Panc1 (cell line): ENCODE measurements at regions of chr20 and their contacts with region 1.

Region 1: GRCh38 chr20:25571817-25572216 is 13.5 kb downstream of the NINL start:
- DNase-seq: no peak
- ATAC-seq: no peak
- H3K4me3 ChIP-seq: no peak overlapping the region
- H3K27ac ChIP-seq: no peak overlapping the region
- H3K4me1 ChIP-seq: no peaks in the 10 kb centered on the region
- H3K27me3 ChIP-seq: no peaks in the 10 kb centered on the region
- CTCF ChIP-seq: no peak

Region 2: DNA sequence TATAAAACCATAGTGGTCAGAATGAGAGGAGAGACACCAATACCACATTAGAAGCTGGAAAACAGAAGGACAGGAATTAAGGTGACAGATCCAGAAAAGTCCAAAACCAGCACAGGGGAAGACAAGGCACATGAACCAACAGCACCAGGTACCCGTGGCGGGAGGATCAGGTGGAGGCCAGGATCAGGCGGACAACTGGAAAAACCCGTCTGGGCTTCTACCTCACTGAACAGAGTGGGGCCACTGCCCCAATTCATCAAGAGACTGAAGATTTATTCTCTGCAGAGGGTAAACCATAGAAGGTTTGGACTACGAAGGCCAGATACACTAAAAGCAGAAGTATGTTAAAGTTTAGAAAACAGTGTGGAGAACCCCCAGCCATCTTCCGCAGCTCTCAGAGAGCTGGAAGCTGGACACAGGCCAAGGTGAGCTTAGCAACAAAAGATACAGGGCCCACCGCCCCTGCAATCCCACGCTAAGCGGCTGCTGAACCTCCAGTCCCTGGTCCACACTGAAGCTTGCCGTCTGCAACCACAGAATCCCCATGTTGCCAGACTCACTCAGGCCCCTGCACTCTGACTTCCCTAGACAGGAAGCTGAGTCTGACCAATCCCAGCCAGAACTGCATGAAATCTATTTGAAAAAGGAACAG is 211.1 kb before region 1 on chr20:
- CTCF ChIA-PET with region 1: no interaction called
- POLR2A ChIA-PET with region 1: no interaction called
- in situ Hi-C with region 1: no loop called
- intact Hi-C with region 1: no loop called
- DNase-seq: no peak
- ATAC-seq: peak; percentile 76; the same call in 1 of the 2 replicates
- H3K4me3 ChIP-seq: no peak overlapping the region
- H3K27ac ChIP-seq: peak overlapping the region; percentile 64
- H3K4me1 ChIP-seq: peaks cover 25% of the 10 kb centered on the region
- H3K27me3 ChIP-seq: no peaks in the 10 kb centered on the region
- CTCF ChIP-seq: no peak

Region 3: GRCh38 chr20:25496968-25497640 is 74.7 kb before region 1 on chr20:
- CTCF ChIA-PET with region 1: no interaction called
- POLR2A ChIA-PET with region 1: no interaction called
- in situ Hi-C with region 1: no loop called
- intact Hi-C with region 1: no loop called
- DNase-seq: peak; percentile 64
- ATAC-seq: peak; percentile 84
- H3K4me3 ChIP-seq: no peak overlapping the region
- H3K27ac ChIP-seq: no peak overlapping the region
- H3K4me1 ChIP-seq: peaks cover 7% of the 10 kb centered on the region
- H3K27me3 ChIP-seq: no peaks in the 10 kb centered on the region
- CTCF ChIP-seq: no peak

Region 4: GRCh38 chr20:25584905-25585704 is 13.3 kb after region 1 on chr20 and contains the start of gene NINL:
- CTCF ChIA-PET with region 1: no interaction called
- POLR2A ChIA-PET with region 1: interaction called, 11 read pairs
- in situ Hi-C with region 1: no loop called
- intact Hi-C with region 1: no loop called
- DNase-seq: no peak
- ATAC-seq: peak; percentile 95
- H3K4me3 ChIP-seq: peak within 1 kb of the TSS; percentile 66 to 93
- H3K27ac ChIP-seq: peak within 1 kb of the TSS; percentile 95
- H3K4me1 ChIP-seq: peaks cover 4% of the 10 kb centered on the region
- H3K27me3 ChIP-seq: no peaks in the 10 kb centered on the region
- CTCF ChIP-seq: no peak
- total RNA-seq, gene NINL: 25.0 TPM